ENCODE measurements at regions of chr1 and their contacts with region 1.

Region 1: DNA sequence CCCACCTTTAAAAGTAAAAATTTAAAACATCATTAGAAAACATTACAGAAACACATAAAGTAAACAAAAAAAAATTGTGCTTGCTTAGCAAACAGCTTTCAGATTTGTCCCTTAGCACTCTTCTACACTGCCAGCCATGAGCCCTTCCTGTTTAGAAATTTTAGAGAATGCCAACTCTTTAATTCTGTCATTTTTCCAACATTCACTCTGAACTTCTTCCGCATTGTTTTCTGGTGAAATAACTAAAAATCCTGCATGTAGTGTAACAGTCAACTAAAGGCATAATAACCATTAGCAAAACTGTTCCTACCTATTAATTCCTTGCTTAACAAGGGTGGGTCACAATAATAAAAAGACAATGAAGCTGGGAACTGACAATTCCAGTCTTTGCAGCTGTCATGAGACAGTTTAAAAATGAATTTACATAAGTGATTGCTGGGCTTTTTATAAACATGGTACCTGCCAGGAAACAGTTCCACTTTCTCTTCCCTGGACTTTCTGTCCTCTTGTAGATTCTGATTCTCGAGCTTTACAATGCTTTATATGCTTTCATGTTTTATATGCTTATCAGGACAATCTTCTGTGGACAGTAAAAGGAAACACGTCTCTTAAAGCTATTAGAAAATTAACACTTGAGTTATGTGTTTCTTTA is 19.0 kb downstream of the GNG12 start:
- DNase-seq: no peak
- H3K4me3 Mint-ChIP-seq: no peak overlapping the region
- H3K27ac Mint-ChIP-seq: peak overlapping the region; percentile 94
- H3K4me1 Mint-ChIP-seq: peaks cover 54% of the 10 kb centered on the region
- H3K27me3 Mint-ChIP-seq: no peaks in the 10 kb centered on the region
- CTCF ChIP-seq: no peak

Region 2: GRCh38 chr1:67664048-67664447 is 150.2 kb before region 1 on chr1:
- CTCF ChIA-PET with region 1: no interaction called
- POLR2A ChIA-PET with region 1: no interaction called
- intact Hi-C with region 1: no loop called
- DNase-seq: no peak
- H3K4me3 Mint-ChIP-seq: no peak overlapping the region
- H3K27ac Mint-ChIP-seq: no peak overlapping the region
- H3K4me1 Mint-ChIP-seq: no peaks in the 10 kb centered on the region
- H3K27me3 Mint-ChIP-seq: no peaks in the 10 kb centered on the region
- CTCF ChIP-seq: no peak

Region 3: DNA sequence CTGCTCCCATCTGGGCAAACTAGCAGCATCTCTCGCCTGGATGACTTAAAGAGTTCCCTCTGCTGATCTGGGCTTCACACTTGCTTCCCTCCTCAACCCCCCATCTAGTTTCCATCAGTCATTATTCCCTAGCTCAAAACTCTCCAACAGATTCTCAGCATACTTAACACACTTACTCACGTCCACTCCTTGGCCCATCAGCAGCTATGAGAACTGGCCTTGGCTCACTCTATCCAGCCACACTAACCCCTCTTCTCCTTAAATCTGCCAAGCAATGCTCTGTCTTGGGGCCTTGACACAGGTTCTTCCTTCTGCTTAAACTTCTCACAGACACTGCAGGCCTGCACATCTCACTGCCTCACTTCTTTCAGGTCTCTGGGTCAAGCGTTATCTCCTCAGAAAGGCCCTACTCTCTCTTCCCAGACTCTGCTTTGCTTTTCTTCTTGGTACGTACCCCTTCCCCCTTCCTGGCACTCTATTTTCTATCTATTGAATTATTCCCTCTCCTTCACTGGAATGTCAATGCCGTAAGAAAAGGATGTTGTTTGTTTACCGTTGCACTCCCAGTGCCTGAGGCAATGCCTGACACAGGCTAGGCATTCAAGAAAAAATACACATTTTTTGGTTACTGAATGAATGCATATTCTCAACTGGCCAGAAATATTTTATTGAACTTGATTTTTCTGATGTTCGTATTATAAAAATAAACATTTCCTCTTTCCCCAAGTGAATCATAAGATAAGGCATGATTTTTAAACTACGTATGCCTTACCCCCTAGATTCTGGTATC is 22.4 kb before region 1 on chr1:
- CTCF ChIA-PET with region 1: interaction called, 4 read pairs
- POLR2A ChIA-PET with region 1: interaction called, 40 read pairs
- intact Hi-C with region 1: no loop called
- DNase-seq: peak; percentile 72
- H3K4me3 Mint-ChIP-seq: peak overlapping the region; percentile 28
- H3K27ac Mint-ChIP-seq: peak overlapping the region; percentile 88
- H3K4me1 Mint-ChIP-seq: peaks cover 65% of the 10 kb centered on the region
- H3K27me3 Mint-ChIP-seq: no peaks in the 10 kb centered on the region
- CTCF ChIP-seq: no peak

Region 4: GRCh38 chr1:67801903-67802302 is 12.3 kb before region 1 on chr1:
- CTCF ChIA-PET with region 1: interaction called, 6 read pairs
- POLR2A ChIA-PET with region 1: interaction called, 6 read pairs
- intact Hi-C with region 1: loop called (anchors 2 kb)
- DNase-seq: no peak
- H3K4me3 Mint-ChIP-seq: no peak overlapping the region
- H3K27ac Mint-ChIP-seq: no peak overlapping the region
- H3K4me1 Mint-ChIP-seq: peaks cover 53% of the 10 kb centered on the region
- H3K27me3 Mint-ChIP-seq: no peaks in the 10 kb centered on the region
- CTCF ChIP-seq: no peak